ENCODE measurements at regions of chr22 and their contacts with region 1.

Region 1: DNA sequence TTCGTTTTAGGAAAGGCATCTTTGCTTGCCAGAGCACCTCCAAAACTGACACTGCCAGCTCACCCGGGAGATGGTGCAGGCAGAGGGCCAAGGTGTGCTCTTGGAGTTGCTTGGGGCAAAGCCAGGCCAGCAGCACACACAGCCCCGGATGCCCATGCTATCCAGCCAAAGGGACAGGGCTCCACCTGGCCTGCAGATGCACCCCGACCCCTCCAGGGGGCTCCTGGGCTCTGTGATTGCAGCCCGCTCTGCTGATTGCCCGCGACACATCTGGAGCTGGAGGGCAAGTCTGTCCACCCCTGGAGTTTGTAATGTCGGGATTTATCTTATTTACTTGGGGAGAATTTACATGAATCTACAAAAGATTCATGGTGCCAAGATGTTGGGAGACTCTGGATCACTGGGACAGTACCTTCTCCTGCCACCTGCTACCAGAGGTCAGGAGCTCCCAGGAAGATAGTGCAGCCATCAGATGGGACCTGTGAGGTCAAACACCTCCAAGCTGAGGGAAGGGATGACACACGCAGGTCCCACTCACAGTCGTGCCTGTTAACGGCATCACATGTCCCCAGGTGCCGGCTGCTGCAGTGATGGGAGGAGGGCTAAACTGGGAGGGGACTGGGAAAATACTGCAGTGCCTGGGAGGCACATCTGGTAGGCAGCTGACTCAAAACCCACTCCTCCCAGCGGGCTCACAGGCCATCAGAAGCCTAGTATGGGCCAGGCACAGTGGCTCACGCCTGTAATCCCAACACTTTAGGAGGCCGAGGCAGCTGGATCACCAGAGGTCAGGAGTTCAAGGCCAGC is 17.2 kb downstream of the CBX7 start:
- DNase-seq: peak in 2 of 7 donors; percentile 20 to 35
- H3K4me3 ChIP-seq: no peak overlapping the region
- H3K27ac ChIP-seq: no peak overlapping the region
- H3K4me1 ChIP-seq: peaks cover 0 to 9% of the 10 kb centered on the region in 2 donors
- H3K27me3 ChIP-seq: no peaks in the 10 kb centered on the region
- CTCF ChIP-seq: peak in 4 of 6 experiments; percentile 9 to 38 (median 20)
- POLR2A ChIP-seq: no peak

Region 2: GRCh38 chr22:39013942-39014722 is 121.2 kb before region 1 on chr22 and contains the start of gene APOBEC3C:
- intact Hi-C with region 1: loop called in 1 of 2 experiments (anchors 10 kb)
- DNase-seq: peak; percentile 83 to 96 (median 95)
- H3K4me3 ChIP-seq: peak within 1 kb of the TSS; percentile 10 to 68 (median 40)
- H3K27ac ChIP-seq: peak within 1 kb of the TSS in 4 of 5 donors; percentile 79 to 96 (median 86)
- H3K4me1 ChIP-seq: peaks cover 10 to 15% of the 10 kb centered on the region in 2 donors
- H3K27me3 ChIP-seq: no peaks in the 10 kb centered on the region
- CTCF ChIP-seq: no peak
- POLR2A ChIP-seq: peak; percentile 33 to 91
- total RNA-seq, gene APOBEC3C: 10.6 to 88.2 (median 39.6) TPM

Measured in adrenal gland (tissue), 19 donors.